PC-3 (cell line): ENCODE measurements at regions of chr4 and their contacts with region 1.

Region 1: GRCh38 chr4:93199492-93199891 is 629.1 kb upstream of the ATOH1 start:
- DNase-seq: peak; percentile 61
- ATAC-seq: peak; percentile 77
- H3K4me3 ChIP-seq: no peak overlapping the region
- H3K27ac ChIP-seq: no peak overlapping the region
- H3K4me1 ChIP-seq: no peaks in the 10 kb centered on the region
- H3K27me3 ChIP-seq: no peaks in the 10 kb centered on the region
- CTCF ChIP-seq: peak; percentile 62

Region 2: DNA sequence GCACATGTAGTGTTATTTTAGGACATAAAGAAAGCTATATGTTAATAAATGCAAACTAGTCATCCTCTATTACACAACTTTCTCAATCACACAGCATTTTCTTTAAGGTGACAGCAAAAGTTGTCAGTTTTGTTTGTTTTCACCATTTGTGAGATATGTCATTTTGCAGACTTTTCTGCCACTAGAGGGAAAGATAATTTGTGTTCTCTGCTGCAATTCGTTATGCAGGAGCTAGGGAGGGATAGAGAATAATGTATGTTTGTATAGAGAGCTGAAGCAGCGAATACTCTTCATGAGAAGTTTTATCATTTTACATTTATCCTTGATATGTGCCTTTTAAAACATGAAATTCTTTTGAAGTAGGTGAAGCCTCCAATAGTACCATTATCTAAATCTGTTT is 41.5 kb before region 1 on chr4:
- CTCF ChIA-PET with region 1: interaction called, 6 read pairs
- POLR2A ChIA-PET with region 1: no interaction called
- intact Hi-C with region 1: loop called (anchors 2 kb)
- DNase-seq: peak; percentile 10
- ATAC-seq: no peak
- H3K4me3 ChIP-seq: no peak overlapping the region
- H3K27ac ChIP-seq: no peak overlapping the region
- H3K4me1 ChIP-seq: no peaks in the 10 kb centered on the region
- H3K27me3 ChIP-seq: no peaks in the 10 kb centered on the region
- CTCF ChIP-seq: peak; percentile 57

Region 3: GRCh38 chr4:93764639-93765246 is 565.3 kb after region 1 on chr4:
- CTCF ChIA-PET with region 1: no interaction called
- POLR2A ChIA-PET with region 1: no interaction called
- intact Hi-C with region 1: loop called (anchors 1 kb)
- DNase-seq: peak; percentile 76
- ATAC-seq: peak; percentile 49; the same call in 1 of the 2 replicates
- H3K4me3 ChIP-seq: no peak overlapping the region
- H3K27ac ChIP-seq: no peak overlapping the region
- H3K4me1 ChIP-seq: no peaks in the 10 kb centered on the region
- H3K27me3 ChIP-seq: no peaks in the 10 kb centered on the region
- CTCF ChIP-seq: peak; percentile 77